ENCODE measurements at regions of chr17 and their contacts with region 1.

Region 1: GRCh38 chr17:48068491-48068961 is 20.4 kb downstream of the NFE2L1 start:
- DNase-seq: peak; percentile 65
- ATAC-seq: peak; percentile 79
- H3K4me3 ChIP-seq: no peak overlapping the region
- H3K27ac ChIP-seq: peak overlapping the region; percentile 68
- H3K4me1 ChIP-seq: peaks cover 2% of the 10 kb centered on the region
- H3K27me3 ChIP-seq: no peaks in the 10 kb centered on the region
- CTCF ChIP-seq: peak; percentile 34
- POLR2A ChIP-seq: no peak
- RAD21 ChIP-seq: peak; percentile 27

Region 2: DNA sequence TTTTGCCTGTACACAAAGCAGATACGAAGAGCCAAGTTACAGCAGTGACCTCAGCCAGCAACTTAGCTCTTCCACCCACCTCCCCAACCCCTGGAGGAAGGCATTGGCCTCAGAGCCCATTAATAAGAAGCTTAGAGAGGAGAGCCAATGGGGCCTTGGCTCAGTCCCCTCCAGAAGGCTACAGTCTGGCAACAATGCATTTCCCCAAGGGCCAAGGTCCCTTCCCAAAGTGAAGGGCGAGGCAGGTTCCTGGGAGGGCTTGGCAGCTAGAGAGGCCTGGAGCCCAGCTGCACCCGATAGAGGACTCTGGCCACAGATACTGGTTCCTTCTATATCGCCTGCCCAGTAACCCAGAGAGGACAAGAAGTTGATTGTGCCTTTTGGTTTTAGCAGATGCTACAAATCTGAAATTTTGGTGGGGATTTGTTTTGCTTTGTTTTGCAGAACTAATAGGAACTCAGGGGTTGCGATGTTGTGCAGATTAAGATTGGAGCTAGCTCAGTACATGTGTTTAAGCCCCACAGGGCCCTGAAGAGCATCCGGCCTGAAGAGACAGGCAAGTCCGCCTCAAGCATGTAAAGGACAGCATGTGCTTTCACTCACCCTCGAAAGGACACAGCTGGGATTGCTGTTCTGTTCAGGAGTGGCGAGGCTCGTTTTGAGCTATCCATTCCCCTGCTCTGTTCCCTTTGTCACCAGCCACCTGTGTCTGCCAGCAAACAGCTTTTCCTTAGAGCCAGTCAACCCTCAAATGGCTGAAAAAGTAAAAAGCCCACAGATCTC is 139.1 kb before region 1 on chr17:
- CTCF ChIA-PET with region 1: no interaction called
- POLR2A ChIA-PET with region 1: no interaction called
- dilution Hi-C with region 1: no loop called
- in situ Hi-C with region 1: no loop called
- intact Hi-C with region 1: no loop called
- DNase-seq: no peak
- ATAC-seq: no peak
- H3K4me3 ChIP-seq: no peak overlapping the region
- H3K27ac ChIP-seq: no peak overlapping the region
- H3K4me1 ChIP-seq: no peaks in the 10 kb centered on the region
- H3K27me3 ChIP-seq: no peaks in the 10 kb centered on the region
- CTCF ChIP-seq: no peak
- POLR2A ChIP-seq: no peak
- RAD21 ChIP-seq: no peak

Region 3: GRCh38 chr17:48030531-48030930 is 38.0 kb before region 1 on chr17:
- CTCF ChIA-PET with region 1: interaction called, 9 read pairs
- POLR2A ChIA-PET with region 1: interaction called, 3 read pairs
- dilution Hi-C with region 1: no loop called
- in situ Hi-C with region 1: loop called (anchors 5 kb)
- intact Hi-C with region 1: no loop called
- DNase-seq: no peak
- ATAC-seq: no peak; the same call in 1 of the 2 replicates
- H3K4me3 ChIP-seq: no peak overlapping the region
- H3K27ac ChIP-seq: no peak overlapping the region
- H3K4me1 ChIP-seq: peaks cover 7% of the 10 kb centered on the region
- H3K27me3 ChIP-seq: no peaks in the 10 kb centered on the region
- CTCF ChIP-seq: no peak
- POLR2A ChIP-seq: no peak
- RAD21 ChIP-seq: no peak

Region 4: DNA sequence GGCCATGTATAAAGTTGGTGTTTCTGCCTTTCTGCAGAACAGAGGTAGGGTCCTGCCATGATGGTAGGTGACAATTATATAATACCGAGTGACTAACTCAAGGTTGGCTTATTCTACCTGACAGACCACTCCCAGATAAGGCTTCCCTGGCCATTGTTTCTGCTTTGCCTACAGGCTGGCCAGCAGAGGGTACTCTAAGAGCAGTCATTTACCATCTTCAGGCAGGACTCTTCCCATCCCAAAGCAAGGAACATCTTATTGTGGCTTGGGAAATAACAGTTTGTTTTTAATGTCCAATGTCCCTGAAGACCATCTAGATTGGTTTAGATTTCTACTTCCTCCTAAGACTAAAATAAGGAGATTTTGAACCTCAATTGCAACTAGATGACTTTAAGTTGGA is 113.1 kb after region 1 on chr17:
- CTCF ChIA-PET with region 1: no interaction called
- POLR2A ChIA-PET with region 1: no interaction called
- dilution Hi-C with region 1: no loop called
- in situ Hi-C with region 1: no loop called
- intact Hi-C with region 1: no loop called
- DNase-seq: peak; percentile 2
- ATAC-seq: no peak
- H3K4me3 ChIP-seq: no peak overlapping the region
- H3K27ac ChIP-seq: no peak overlapping the region
- H3K4me1 ChIP-seq: no peaks in the 10 kb centered on the region
- H3K27me3 ChIP-seq: peaks cover 72% of the 10 kb centered on the region
- CTCF ChIP-seq: 0 out of 2 replicates have a peak, but pooled peaks have one; percentile 5
- POLR2A ChIP-seq: no peak
- RAD21 ChIP-seq: no peak

Measured in IMR-90 (cell line).